Activated B cell treated with CpG ODN at 0.5 μM for 24 hours (primary cell): ENCODE measurements at regions of chr5 and their contacts with region 1.

Region 1: GRCh38 chr5:57184322-57184721 is 10.5 kb downstream of the GPBP1 start:
- DNase-seq: no peak
- ATAC-seq: no peak
- H3K4me3 Mint-ChIP-seq: peak overlapping the region; percentile 32
- H3K27ac Mint-ChIP-seq: no peak overlapping the region
- H3K4me1 Mint-ChIP-seq: peaks cover 82% of the 10 kb centered on the region
- H3K27me3 Mint-ChIP-seq: no peaks in the 10 kb centered on the region
- CTCF ChIP-seq: no peak

Region 2: GRCh38 chr5:56460679-56461191 is 723.6 kb before region 1 on chr5:
- CTCF ChIA-PET with region 1: no interaction called
- POLR2A ChIA-PET with region 1: no interaction called
- intact Hi-C with region 1: no loop called
- DNase-seq: no peak
- ATAC-seq: no peak
- H3K4me3 Mint-ChIP-seq: no peak overlapping the region
- H3K27ac Mint-ChIP-seq: no peak overlapping the region
- H3K4me1 Mint-ChIP-seq: peaks cover 19% of the 10 kb centered on the region
- H3K27me3 Mint-ChIP-seq: no peaks in the 10 kb centered on the region
- CTCF ChIP-seq: no peak

Region 3: GRCh38 chr5:57199866-57200265 is 15.5 kb after region 1 on chr5:
- CTCF ChIA-PET with region 1: no interaction called
- POLR2A ChIA-PET with region 1: interaction called, 4 read pairs
- intact Hi-C with region 1: loop called (anchors 2 kb)
- DNase-seq: no peak
- ATAC-seq: peak; percentile 28
- H3K4me3 Mint-ChIP-seq: peak overlapping the region; percentile 48
- H3K27ac Mint-ChIP-seq: peak overlapping the region; percentile 5
- H3K4me1 Mint-ChIP-seq: peaks cover 64% of the 10 kb centered on the region
- H3K27me3 Mint-ChIP-seq: no peaks in the 10 kb centered on the region
- CTCF ChIP-seq: no peak